ENCODE measurements at regions of chr1 and their contacts with region 1.

Region 1: GRCh38 chr1:159089184-159089791 is 12.7 kb upstream of the AIM2 start:
- DNase-seq: peak; percentile 60
- H3K4me3 ChIP-seq: no peak overlapping the region
- H3K27ac ChIP-seq: no peak overlapping the region
- H3K4me1 ChIP-seq: peaks cover 10% of the 10 kb centered on the region
- CTCF ChIP-seq: peak; percentile 93

Region 2: DNA sequence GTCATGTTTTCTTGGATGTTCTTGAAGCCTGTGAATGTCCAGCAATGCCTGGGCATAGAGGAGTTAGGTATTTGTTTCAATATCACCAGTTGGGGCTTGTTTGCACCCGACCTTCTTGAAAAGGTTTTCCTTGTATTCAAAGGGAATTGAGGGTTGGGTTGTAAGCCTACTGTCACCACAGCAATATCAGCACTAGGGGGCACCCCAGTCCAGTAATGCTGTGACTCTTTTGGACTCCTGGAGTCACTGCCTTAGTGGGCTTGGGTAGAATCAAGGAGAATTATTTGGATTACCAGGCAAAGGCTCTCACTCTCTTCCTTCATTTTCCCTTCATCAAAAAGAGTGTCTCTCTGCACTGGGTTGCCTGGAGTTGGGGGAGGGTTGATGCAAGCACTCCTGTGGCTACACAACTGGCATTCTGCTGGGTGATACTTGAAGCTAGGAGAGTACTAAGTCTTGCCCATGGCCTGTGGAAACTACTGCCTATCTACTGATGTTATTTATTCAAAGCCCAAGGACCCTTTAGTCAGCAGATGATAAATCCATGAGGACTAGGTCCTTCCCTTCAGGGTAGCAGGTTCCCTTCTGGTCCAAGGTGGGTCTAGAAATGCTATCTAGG is 582.8 kb before region 1 on chr1:
- CTCF ChIA-PET with region 1: no interaction called
- POLR2A ChIA-PET with region 1: no interaction called
- intact Hi-C with region 1: loop called (anchors 5 kb)
- DNase-seq: peak; percentile 56
- H3K4me3 ChIP-seq: no peak overlapping the region
- H3K27ac ChIP-seq: no peak overlapping the region
- H3K4me1 ChIP-seq: no peaks in the 10 kb centered on the region
- CTCF ChIP-seq: peak; percentile 84

Region 3: GRCh38 chr1:158752155-158752712 is 337.1 kb before region 1 on chr1:
- CTCF ChIA-PET with region 1: no interaction called
- POLR2A ChIA-PET with region 1: no interaction called
- intact Hi-C with region 1: no loop called
- DNase-seq: no peak
- H3K4me3 ChIP-seq: no peak overlapping the region
- H3K27ac ChIP-seq: no peak overlapping the region
- H3K4me1 ChIP-seq: no peaks in the 10 kb centered on the region
- CTCF ChIP-seq: no peak

Region 4: GRCh38 chr1:159077120-159077961 is 11.9 kb before region 1 on chr1:
- CTCF ChIA-PET with region 1: interaction called, 5 read pairs
- POLR2A ChIA-PET with region 1: interaction called, 23 read pairs
- intact Hi-C with region 1: no loop called
- DNase-seq: peak; percentile 67
- H3K4me3 ChIP-seq: peak overlapping the region; percentile 68
- H3K27ac ChIP-seq: peak overlapping the region; percentile 86
- H3K4me1 ChIP-seq: peaks cover 41% of the 10 kb centered on the region
- CTCF ChIP-seq: no peak